ENCODE measurements at regions of chr5 and their contacts with region 1.

Region 1: DNA sequence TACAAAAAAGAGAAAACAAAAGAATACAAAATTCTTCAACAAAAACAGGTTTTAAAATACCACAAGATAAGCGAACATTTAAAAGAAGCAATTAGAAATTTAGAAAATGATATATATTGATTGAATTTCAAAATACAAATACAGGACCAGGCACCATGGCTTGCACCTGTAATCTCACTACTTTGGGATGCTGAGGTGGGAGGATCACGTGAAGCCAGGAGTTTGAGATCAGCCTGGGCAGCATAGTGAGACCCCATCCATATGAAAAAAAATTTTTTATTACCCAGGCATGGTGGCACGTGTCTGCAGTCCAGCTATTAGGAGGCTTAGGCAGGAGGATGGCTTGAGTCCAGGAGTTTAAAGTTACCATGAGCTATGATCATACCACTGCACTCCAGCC is 109.9 kb upstream of the SLC30A5 start:
- DNase-seq: no peak
- ATAC-seq: no peak
- H3K4me3 ChIP-seq: no peak overlapping the region
- H3K27ac ChIP-seq: no peak overlapping the region
- H3K4me1 ChIP-seq: no peaks in the 10 kb centered on the region
- H3K27me3 ChIP-seq: peaks cover 0 to 3% of the 10 kb centered on the region in 2 experiments; a peak in 3 of 5 replicates
- CTCF ChIP-seq: no peak
- EP300 ChIP-seq: no peak
- POLR2A ChIP-seq: no peak
- RAD21 ChIP-seq: no peak

Region 2: DNA sequence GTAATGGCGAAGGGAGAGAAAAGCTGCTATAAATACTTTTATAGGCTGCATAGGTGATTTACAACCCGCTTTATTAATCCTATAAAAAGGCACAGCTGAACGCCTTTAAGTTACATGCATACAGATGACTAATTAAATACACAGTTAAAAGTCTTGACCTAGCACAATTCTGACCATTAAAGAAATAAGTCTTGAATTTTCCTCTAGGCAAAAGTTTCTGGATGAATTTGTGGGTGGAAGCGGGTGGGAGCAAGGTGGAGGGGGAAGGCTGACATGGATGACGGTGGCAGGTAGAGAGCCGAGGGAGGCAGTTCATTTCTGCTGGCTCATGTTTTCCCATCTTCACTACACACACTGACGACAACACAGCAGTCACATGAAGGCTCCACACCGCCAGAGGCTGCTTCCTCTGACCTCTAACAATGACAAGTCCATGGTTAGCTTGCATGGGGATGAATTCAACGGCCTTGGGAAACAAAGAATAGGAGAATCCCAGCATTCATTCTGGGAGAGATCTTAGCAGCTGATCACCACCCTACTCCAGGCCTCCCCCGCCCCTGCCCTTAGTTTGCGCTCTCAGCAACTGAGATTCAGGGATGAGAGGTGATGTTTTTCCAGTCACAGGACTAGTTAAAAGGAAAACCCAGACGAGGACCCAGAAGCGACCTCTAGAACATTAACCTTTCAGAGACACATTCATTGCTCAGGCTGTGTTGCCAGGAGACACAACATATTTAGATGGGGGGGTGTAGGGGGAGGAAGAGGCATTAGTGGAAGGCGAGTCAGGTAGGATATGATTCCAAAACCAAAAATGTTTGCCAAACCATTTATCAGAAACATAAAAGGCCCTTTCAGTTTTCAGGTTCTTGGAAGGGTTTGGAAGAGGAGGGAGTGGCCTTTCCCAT is 439.1 kb before region 1 on chr5:
- CTCF ChIA-PET with region 1: no interaction called
- POLR2A ChIA-PET with region 1: no interaction called
- in situ Hi-C with region 1: no loop called
- intact Hi-C with region 1: no loop called
- DNase-seq: peak in 1 of 4 experiments; percentile 11
- ATAC-seq: 0 out of 3 replicates have a peak, but pooled peaks have one; percentile 36
- H3K4me3 ChIP-seq: no peak overlapping the region
- H3K27ac ChIP-seq: no peak overlapping the region
- H3K4me1 ChIP-seq: peaks cover 4 to 6% of the 10 kb centered on the region in 2 experiments; a peak in 3 of 5 replicates
- H3K27me3 ChIP-seq: peaks cover 9% of the 10 kb centered on the region in 2 experiments
- CTCF ChIP-seq: no peak
- EP300 ChIP-seq: no peak
- POLR2A ChIP-seq: no peak
- RAD21 ChIP-seq: no peak

Region 3: GRCh38 chr5:68821056-68821455 is 162.9 kb before region 1 on chr5:
- CTCF ChIA-PET with region 1: no interaction called
- POLR2A ChIA-PET with region 1: no interaction called
- in situ Hi-C with region 1: no loop called
- intact Hi-C with region 1: no loop called
- DNase-seq: no peak
- ATAC-seq: no peak
- H3K4me3 ChIP-seq: no peak overlapping the region
- H3K27ac ChIP-seq: no peak overlapping the region
- H3K4me1 ChIP-seq: no peaks in the 10 kb centered on the region
- H3K27me3 ChIP-seq: peaks cover 0 to 2% of the 10 kb centered on the region in 2 experiments; a peak in 2 of 5 replicates
- CTCF ChIP-seq: no peak
- EP300 ChIP-seq: no peak
- POLR2A ChIP-seq: no peak
- RAD21 ChIP-seq: no peak

Region 4: GRCh38 chr5:68970617-68971016 is 13.3 kb before region 1 on chr5:
- CTCF ChIA-PET with region 1: no interaction called
- POLR2A ChIA-PET with region 1: interaction called, 13 read pairs
- in situ Hi-C with region 1: no loop called
- intact Hi-C with region 1: no loop called
- DNase-seq: no peak
- ATAC-seq: no peak
- H3K4me3 ChIP-seq: no peak overlapping the region
- H3K27ac ChIP-seq: no peak overlapping the region
- H3K4me1 ChIP-seq: no peaks in the 10 kb centered on the region
- H3K27me3 ChIP-seq: peaks cover 4 to 19% of the 10 kb centered on the region in 2 experiments; a peak in 4 of 5 replicates
- CTCF ChIP-seq: no peak
- EP300 ChIP-seq: no peak
- POLR2A ChIP-seq: no peak
- RAD21 ChIP-seq: no peak; a peak in 1 of 4 replicates

Region 5: DNA sequence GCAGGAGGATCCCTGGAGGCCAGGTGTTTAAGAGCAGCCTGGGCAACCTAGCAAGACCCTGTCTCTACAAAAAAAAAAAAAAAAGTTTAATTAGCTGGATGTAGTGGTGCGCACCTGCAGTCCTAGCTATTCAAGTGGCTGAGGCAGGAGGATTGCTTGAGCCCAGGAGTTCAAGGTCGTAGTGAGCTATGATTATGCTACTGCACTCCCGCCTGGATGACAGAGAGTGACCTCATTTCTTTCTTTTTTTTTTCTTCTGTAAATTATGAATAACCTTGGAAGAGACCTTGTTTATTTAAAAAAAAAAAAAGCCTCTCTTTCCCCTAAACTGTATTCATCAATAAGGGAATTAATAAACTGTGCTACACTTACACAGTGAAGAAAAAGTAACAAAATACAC is 66.3 kb after region 1 on chr5:
- CTCF ChIA-PET with region 1: no interaction called
- POLR2A ChIA-PET with region 1: no interaction called
- in situ Hi-C with region 1: no loop called
- intact Hi-C with region 1: no loop called
- DNase-seq: no peak
- ATAC-seq: no peak
- H3K4me3 ChIP-seq: no peak overlapping the region
- H3K27ac ChIP-seq: no peak overlapping the region
- H3K4me1 ChIP-seq: peaks cover 4 to 14% of the 10 kb centered on the region in 2 experiments; a peak in 3 of 5 replicates
- H3K27me3 ChIP-seq: no peaks in the 10 kb centered on the region
- CTCF ChIP-seq: no peak
- EP300 ChIP-seq: no peak
- POLR2A ChIP-seq: no peak
- RAD21 ChIP-seq: no peak